Mammary epithelial cell (primary cell): ENCODE measurements at regions of chrX and their contacts with region 1.

Region 1: GRCh38 chrX:101097546-101098453 is at the start of gene CENPI:
- DNase-seq: peak; percentile 91
- H3K4me3 ChIP-seq: peak within 1 kb of the TSS; percentile 53 to 72 (median 55)
- H3K27ac ChIP-seq: peak within 1 kb of the TSS; percentile 55
- H3K4me1 ChIP-seq: peaks cover 3% of the 10 kb centered on the region
- H3K27me3 ChIP-seq: no peaks in the 10 kb centered on the region
- CTCF ChIP-seq: no peak
- total RNA-seq, gene CENPI: 2.2 to 13.9 TPM

Region 2: GRCh38 chrX:101051549-101052302 is 46.1 kb before region 1 on chrX and contains the start of gene TRMT2B:
- CTCF ChIA-PET with region 1: no interaction called
- dilution Hi-C with region 1: no loop called
- in situ Hi-C with region 1: no loop called
- intact Hi-C with region 1: loop called (anchors 1 kb)
- DNase-seq: peak; percentile 68
- H3K4me3 ChIP-seq: peak within 1 kb of the TSS; percentile 51 to 60 (median 58)
- H3K27ac ChIP-seq: peak within 1 kb of the TSS; percentile 49
- H3K4me1 ChIP-seq: no peaks in the 10 kb centered on the region
- H3K27me3 ChIP-seq: no peaks in the 10 kb centered on the region
- CTCF ChIP-seq: no peak
- total RNA-seq, gene TRMT2B: 15.2 to 15.5 TPM

Region 3: DNA sequence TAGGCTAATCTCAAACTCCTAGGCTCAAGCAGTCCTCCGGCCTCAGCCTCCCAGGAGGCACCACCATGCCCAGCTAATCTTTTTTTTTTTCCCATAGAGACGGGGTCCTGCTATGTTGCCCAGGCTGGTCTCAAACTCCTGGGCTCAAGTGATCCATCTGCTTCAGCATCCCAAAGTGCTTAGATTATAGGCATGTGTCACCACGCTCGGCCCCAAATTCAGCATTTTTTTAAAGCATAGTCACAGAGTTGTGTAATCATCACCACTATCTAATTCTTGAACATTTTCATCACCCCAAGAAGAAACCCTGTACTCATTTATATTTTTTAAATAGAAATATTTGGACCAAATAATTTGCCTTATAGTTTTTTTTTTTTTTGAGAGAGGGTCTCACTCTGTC is 10.5 kb after region 1 on chrX:
- CTCF ChIA-PET with region 1: no interaction called
- dilution Hi-C with region 1: no loop called
- in situ Hi-C with region 1: no loop called
- intact Hi-C with region 1: no loop called
- DNase-seq: no peak
- H3K4me3 ChIP-seq: no peak overlapping the region
- H3K27ac ChIP-seq: no peak overlapping the region
- H3K4me1 ChIP-seq: no peaks in the 10 kb centered on the region
- H3K27me3 ChIP-seq: no peaks in the 10 kb centered on the region
- CTCF ChIP-seq: no peak